Uterus (tissue), 4 donors: ENCODE measurements at regions of chr5 and their contacts with region 1.

Region 1: DNA sequence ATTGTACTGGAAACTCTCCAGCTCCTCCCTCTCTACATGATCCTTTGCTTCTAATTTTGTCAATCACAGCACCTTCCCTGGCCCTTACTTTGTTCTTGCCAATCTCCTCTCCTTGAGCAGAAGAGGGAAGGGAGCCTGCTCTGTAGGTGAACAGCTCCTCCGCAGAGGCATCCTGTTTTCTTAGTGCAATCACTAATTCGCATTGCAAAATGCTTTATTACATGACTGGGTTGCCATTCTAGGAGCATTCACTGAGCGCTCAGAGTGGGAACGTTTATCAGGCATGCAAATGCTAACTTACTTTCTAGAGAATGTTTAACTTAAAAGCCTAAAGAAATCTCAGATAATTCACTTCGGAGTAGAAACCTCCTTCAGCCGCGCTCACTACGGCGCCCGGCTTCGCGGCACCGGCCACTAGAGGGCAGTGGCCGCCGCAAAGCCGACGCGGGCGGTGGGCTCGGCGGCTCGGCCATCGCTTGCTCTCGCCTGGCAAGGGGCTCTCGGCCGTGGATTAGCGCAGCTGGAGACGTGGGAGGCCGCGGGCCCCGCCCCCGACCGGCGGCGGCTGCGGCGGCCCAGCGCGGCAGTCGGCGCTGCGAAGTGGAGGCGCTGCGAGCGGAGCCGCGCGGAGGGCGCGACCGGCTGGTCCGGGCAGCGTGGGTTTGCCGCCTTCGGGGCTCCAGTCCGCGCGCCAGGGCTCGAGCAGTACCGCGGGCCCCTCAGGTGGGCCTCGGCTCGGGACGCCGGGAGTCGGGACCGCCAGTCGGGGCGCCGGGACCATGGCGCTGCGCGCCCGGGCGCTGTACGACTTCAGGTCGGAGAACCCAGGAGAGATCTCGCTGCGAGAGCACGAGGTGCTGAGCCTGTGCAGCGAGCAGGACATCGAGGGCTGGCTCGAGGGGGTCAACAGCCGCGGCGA is at the start of gene SNX18:
- DNase-seq: peak; percentile 91
- H3K4me3 ChIP-seq: peak within 1 kb of the TSS; percentile 39 to 96
- H3K27ac ChIP-seq: peak within 1 kb of the TSS; percentile 90 to 92
- H3K4me1 ChIP-seq: peaks cover 0 to 7% of the 10 kb centered on the region in 2 donors
- H3K27me3 ChIP-seq: no peaks in the 10 kb centered on the region
- CTCF ChIP-seq: peak; percentile 96 to 99 (median 98)
- POLR2A ChIP-seq: peak; percentile 83 to 87
- total RNA-seq, gene SNX18: 33.6 to 59.1 (median 51.2) TPM

Region 2: DNA sequence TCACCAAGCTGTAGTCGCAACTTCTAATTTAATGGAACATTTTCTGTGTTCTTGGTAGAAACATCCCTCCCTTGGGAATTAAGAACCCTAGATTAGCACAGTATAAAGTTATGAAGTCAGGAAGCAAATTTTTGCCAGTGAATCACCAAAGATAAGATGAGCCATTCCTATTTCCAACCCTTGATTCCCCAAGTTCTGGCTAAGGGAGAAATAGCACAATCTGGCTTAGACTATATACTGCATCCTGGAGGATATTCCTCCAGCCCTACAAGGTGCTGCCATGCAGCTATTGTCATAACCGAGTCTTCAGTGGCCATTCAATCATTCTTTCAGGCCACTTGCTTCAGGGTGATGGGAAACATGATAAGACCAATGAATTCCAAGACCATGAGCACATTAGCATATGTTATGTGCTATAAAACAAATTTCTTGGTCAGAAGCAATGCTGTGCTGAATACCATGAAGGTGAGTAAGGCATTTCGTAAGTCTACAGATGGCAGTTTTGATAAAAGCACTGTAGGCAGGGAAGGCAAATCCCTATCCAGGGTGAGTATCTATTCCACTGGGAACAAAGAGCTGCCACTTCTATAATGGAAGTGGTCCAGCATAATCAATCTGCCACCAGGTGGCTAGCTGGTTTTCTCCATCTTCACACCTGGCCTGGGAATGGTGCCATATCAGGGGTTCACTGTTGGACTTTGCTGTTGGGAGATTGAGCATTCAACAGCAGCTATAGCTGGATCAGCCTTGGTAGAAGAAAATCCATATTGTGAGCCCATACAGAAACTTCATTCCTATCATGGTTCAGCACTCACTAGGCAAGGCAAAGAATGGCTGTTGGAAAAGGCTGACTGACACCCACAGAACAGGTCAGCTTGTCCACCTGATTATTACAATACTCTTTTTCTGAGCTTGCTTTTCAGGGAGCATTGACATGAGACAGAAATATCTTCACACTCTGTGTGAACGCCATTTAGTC is 187.4 kb before region 1 on chr5:
- intact Hi-C with region 1: no loop called
- DNase-seq: no peak
- H3K4me3 ChIP-seq: no peak overlapping the region
- H3K27ac ChIP-seq: no peak overlapping the region
- H3K4me1 ChIP-seq: no peaks in the 10 kb centered on the region
- H3K27me3 ChIP-seq: no peaks in the 10 kb centered on the region
- CTCF ChIP-seq: no peak
- POLR2A ChIP-seq: no peak

Region 3: GRCh38 chr5:54844905-54845566 is 327.6 kb after region 1 on chr5:
- intact Hi-C with region 1: loop called (anchors 5 kb)
- DNase-seq: no peak
- H3K4me3 ChIP-seq: no peak overlapping the region
- H3K27ac ChIP-seq: peak overlapping the region in 1 of 2 donors; percentile 52
- H3K4me1 ChIP-seq: no peaks in the 10 kb centered on the region
- H3K27me3 ChIP-seq: no peaks in the 10 kb centered on the region
- CTCF ChIP-seq: peak; percentile 58 to 75 (median 68)
- POLR2A ChIP-seq: no peak